ENCODE measurements at regions of chr22 and their contacts with region 1.

Region 1: GRCh38 chr22:42780070-42780540 is 59.4 kb upstream of the A4GALT start:
- DNase-seq: no peak
- H3K4me3 ChIP-seq: no peak overlapping the region
- H3K27ac ChIP-seq: no peak overlapping the region
- H3K4me1 ChIP-seq: peaks cover 0 to 13% (median 0%) of the 10 kb centered on the region in 3 donors
- H3K27me3 ChIP-seq: no peaks in the 10 kb centered on the region
- CTCF ChIP-seq: peak; percentile 66 to 90 (median 82)
- POLR2A ChIP-seq: no peak

Region 2: DNA sequence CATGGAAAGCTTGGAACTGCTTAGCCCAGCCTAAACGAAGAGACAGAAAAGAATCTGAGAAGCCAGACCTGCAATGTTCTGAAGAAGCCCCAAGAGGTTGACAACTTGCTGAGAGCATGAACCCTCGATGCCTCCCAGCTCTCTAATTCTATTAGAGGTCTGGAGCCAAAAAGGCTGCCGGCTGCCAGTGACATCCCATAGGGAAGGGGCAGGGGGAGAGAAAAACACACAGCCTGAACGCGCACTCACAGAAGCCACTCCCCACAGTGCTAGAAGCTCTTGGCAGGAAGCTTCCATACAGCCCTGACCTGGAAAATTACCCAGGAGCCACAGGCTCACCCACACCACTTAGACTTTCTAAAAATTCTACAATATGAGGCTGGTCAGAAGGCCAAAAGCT is 183.8 kb before region 1 on chr22:
- intact Hi-C with region 1: no loop called
- DNase-seq: no peak
- H3K4me3 ChIP-seq: no peak overlapping the region
- H3K27ac ChIP-seq: no peak overlapping the region
- H3K4me1 ChIP-seq: peaks cover 0 to 16% (median 0%) of the 10 kb centered on the region in 3 donors
- H3K27me3 ChIP-seq: no peaks in the 10 kb centered on the region
- CTCF ChIP-seq: no peak
- POLR2A ChIP-seq: no peak

Region 3: DNA sequence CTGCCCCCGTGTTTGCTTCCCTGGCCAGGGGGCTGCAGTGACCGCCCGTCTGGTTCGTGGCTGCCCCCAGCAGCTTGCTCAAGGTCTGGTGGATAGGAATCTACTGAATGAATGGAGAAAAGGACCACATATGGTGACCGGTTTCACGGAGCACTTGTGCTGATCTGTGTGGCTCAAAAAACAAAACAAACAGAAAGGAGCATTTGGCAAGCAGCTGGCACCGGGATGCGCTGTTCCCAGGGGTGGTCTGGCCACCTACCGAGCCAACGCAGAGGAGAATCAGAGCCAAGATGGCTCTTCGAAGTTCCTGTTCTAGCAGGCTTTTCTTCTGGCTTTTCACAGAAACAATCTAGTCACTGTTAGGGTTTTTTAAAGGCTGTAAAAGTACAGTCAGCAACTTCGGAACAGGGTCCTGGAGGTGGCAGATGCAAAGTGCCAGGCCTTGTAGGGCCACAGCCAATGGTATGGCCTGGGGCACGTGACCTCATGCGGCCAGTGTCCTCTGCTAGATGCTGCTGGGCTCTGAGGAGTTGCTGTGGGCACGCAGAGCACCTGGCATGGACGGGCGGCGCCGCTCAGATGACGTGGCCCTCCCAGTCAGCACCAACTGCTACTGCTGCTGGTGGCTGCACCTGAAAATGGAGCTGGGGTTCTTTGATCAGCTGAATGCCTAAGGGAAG is 262.1 kb after region 1 on chr22:
- intact Hi-C with region 1: loop called (anchors 10 kb)
- DNase-seq: no peak
- H3K4me3 ChIP-seq: no peak overlapping the region
- H3K27ac ChIP-seq: peak overlapping the region in 1 of 4 donors; percentile 36
- H3K4me1 ChIP-seq: peaks cover 0 to 16% (median 0%) of the 10 kb centered on the region in 3 donors
- H3K27me3 ChIP-seq: no peaks in the 10 kb centered on the region
- CTCF ChIP-seq: no peak
- POLR2A ChIP-seq: no peak

Measured in esophagus squamous epithelium (tissue), 5 donors.